ENCODE measurements at regions of chr20 and their contacts with region 1.

Region 1: GRCh38 chr20:9359561-9360308 is 154.7 kb upstream of the LAMP5 start:
- DNase-seq: peak; percentile 62
- H3K4me3 Mint-ChIP-seq: no peak overlapping the region
- H3K27ac Mint-ChIP-seq: no peak overlapping the region
- H3K4me1 Mint-ChIP-seq: no peaks in the 10 kb centered on the region
- H3K27me3 Mint-ChIP-seq: no peaks in the 10 kb centered on the region
- CTCF ChIP-seq: peak; percentile 51

Region 2: DNA sequence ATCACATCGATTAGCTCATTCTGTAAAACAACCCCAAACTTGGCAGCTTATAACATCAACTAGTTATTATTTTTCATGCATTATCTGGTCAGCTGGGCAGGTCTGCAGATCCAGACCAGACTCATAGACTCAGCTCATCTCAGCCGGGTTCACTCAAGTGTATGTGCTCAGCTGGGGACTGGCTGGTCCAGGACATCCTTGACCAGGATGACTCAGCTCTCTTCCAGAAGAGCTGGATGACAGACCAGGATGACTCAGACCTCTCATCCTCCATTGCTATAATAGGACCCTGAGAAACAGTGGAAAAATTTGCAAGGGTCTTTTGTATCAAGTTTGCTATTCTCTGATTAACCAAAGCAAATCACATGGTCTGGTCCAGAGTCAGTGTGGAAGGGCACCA is 603.3 kb before region 1 on chr20:
- CTCF ChIA-PET with region 1: interaction called, 10 read pairs
- POLR2A ChIA-PET with region 1: interaction called, 6 read pairs
- intact Hi-C with region 1: loop called (anchors 1 kb)
- DNase-seq: peak; percentile 76
- H3K4me3 Mint-ChIP-seq: no peak overlapping the region
- H3K27ac Mint-ChIP-seq: no peak overlapping the region
- H3K4me1 Mint-ChIP-seq: peaks cover 17% of the 10 kb centered on the region
- H3K27me3 Mint-ChIP-seq: no peaks in the 10 kb centered on the region
- CTCF ChIP-seq: no peak

Region 3: GRCh38 chr20:8790442-8791074 is 569.2 kb before region 1 on chr20:
- CTCF ChIA-PET with region 1: interaction called, 52 read pairs
- POLR2A ChIA-PET with region 1: interaction called, 3 read pairs
- intact Hi-C with region 1: loop called (anchors 1 kb)
- DNase-seq: peak; percentile 69
- H3K4me3 Mint-ChIP-seq: no peak overlapping the region
- H3K27ac Mint-ChIP-seq: no peak overlapping the region
- H3K4me1 Mint-ChIP-seq: no peaks in the 10 kb centered on the region
- H3K27me3 Mint-ChIP-seq: peaks cover 26% of the 10 kb centered on the region
- CTCF ChIP-seq: peak; percentile 95

Region 4: DNA sequence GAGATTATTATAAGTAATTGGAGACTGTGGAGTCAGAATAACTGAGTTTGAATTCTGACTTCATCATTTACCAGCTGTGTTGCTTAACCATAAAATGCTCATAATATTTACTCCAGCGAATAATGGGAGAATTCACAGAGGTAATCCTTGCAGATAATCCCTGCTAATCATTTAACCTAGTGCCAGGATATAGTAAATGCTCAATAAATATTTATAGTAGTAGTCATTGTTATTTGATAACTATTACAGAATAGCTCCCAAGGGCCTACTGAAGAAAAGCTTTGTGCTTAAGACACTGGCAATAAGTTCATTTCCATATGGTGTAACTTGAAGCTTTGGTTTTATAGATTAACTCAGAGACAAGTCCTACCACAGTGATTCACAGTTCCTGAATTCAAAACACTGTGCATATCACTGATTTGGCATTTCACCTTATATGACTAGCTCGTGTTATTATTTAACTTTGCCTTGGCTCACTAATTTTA is 499.7 kb before region 1 on chr20:
- CTCF ChIA-PET with region 1: interaction called, 85 read pairs
- POLR2A ChIA-PET with region 1: no interaction called
- intact Hi-C with region 1: no loop called
- DNase-seq: peak; percentile 60
- H3K4me3 Mint-ChIP-seq: no peak overlapping the region
- H3K27ac Mint-ChIP-seq: no peak overlapping the region
- H3K4me1 Mint-ChIP-seq: peaks cover 10% of the 10 kb centered on the region
- H3K27me3 Mint-ChIP-seq: no peaks in the 10 kb centered on the region
- CTCF ChIP-seq: no peak

Region 5: DNA sequence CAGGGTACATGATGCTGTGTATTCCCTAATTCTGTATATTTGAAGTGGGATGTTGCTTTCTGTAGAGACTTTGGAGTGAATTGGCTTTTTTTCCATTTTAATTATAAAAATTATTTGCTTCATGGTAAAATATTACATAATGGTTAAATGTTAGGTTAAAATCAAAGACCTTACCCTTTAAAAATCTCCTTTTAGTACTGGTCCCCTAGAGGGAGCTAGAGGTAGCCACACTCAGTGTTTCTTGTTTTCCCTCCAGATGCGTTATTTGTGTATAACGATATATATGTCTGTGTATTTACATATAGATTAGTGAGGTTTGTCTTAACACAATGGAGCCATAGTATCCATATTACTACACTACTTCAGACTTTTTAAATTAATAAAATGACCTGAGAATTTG is 144.2 kb before region 1 on chr20:
- CTCF ChIA-PET with region 1: interaction called, 3 read pairs
- POLR2A ChIA-PET with region 1: interaction called, 3 read pairs
- intact Hi-C with region 1: loop called (anchors 10 kb)
- DNase-seq: peak; percentile 42
- H3K4me3 Mint-ChIP-seq: no peak overlapping the region
- H3K27ac Mint-ChIP-seq: no peak overlapping the region
- H3K4me1 Mint-ChIP-seq: peaks cover 10% of the 10 kb centered on the region
- H3K27me3 Mint-ChIP-seq: no peaks in the 10 kb centered on the region
- CTCF ChIP-seq: peak; percentile 37

Region 6: GRCh38 chr20:9344083-9344920 is 15.4 kb before region 1 on chr20:
- CTCF ChIA-PET with region 1: interaction called, 27 read pairs
- POLR2A ChIA-PET with region 1: interaction called, 4 read pairs
- intact Hi-C with region 1: no loop called
- DNase-seq: peak; percentile 66
- H3K4me3 Mint-ChIP-seq: no peak overlapping the region
- H3K27ac Mint-ChIP-seq: no peak overlapping the region
- H3K4me1 Mint-ChIP-seq: peaks cover 16% of the 10 kb centered on the region
- H3K27me3 Mint-ChIP-seq: no peaks in the 10 kb centered on the region
- CTCF ChIP-seq: no peak

Region 7: GRCh38 chr20:9412309-9412708 is 52.6 kb after region 1 on chr20:
- CTCF ChIA-PET with region 1: no interaction called
- POLR2A ChIA-PET with region 1: no interaction called
- intact Hi-C with region 1: no loop called
- DNase-seq: no peak
- H3K4me3 Mint-ChIP-seq: no peak overlapping the region
- H3K27ac Mint-ChIP-seq: no peak overlapping the region
- H3K4me1 Mint-ChIP-seq: no peaks in the 10 kb centered on the region
- H3K27me3 Mint-ChIP-seq: no peaks in the 10 kb centered on the region
- CTCF ChIP-seq: no peak